RWPE1 (cell line): ENCODE measurements at regions of chr11 and their contacts with region 1.

Region 1: GRCh38 chr11:34468209-34468841 is 29.6 kb downstream of the CAT start:
- DNase-seq: peak; percentile 43
- H3K27ac ChIP-seq: no peak overlapping the region
- CTCF ChIP-seq: peak; percentile 85

Region 2: DNA sequence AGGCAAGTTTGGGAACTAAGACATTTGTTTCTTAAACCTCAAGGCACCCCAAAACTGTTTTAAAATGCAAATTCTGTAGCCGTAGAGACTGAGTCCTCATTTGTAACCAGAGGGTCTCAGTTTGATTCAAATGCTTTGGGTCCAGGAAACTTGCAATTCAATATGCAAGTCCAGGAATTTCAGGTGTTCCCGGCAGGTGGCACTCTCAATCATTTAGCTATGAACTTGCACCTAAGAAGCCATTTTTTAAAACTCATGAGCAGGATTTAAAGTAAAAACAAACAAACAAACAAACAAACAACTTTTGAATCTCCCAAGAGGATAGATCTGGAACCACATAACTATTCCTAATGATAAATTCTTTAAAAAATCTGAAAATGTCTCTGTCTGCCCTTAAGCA is 101.8 kb before region 1 on chr11:
- CTCF ChIA-PET with region 1: interaction called, 12 read pairs
- POLR2A ChIA-PET with region 1: no interaction called
- DNase-seq: no peak
- H3K27ac ChIP-seq: no peak overlapping the region
- CTCF ChIP-seq: no peak